Left lung (tissue), 14 donors: ENCODE measurements at regions of chr17 and their contacts with region 1.

Region 1: GRCh38 chr17:10198509-10199253 is at the start of gene GAS7:
- DNase-seq: peak; percentile 66 to 95 (median 82)
- ATAC-seq: peak; percentile 75
- H3K4me3 ChIP-seq: peak within 1 kb of the TSS; percentile 48 to 66
- H3K27ac ChIP-seq: peak within 1 kb of the TSS in 1 of 2 donors; percentile 21
- H3K4me1 ChIP-seq: peaks cover 2 to 27% of the 10 kb centered on the region in 2 donors
- H3K27me3 ChIP-seq: peaks cover 15 to 62% of the 10 kb centered on the region in 2 donors
- CTCF ChIP-seq: no peak
- polyA plus RNA-seq, gene GAS7: 30.4 to 45.1 (median 35.4) TPM

Region 2: DNA sequence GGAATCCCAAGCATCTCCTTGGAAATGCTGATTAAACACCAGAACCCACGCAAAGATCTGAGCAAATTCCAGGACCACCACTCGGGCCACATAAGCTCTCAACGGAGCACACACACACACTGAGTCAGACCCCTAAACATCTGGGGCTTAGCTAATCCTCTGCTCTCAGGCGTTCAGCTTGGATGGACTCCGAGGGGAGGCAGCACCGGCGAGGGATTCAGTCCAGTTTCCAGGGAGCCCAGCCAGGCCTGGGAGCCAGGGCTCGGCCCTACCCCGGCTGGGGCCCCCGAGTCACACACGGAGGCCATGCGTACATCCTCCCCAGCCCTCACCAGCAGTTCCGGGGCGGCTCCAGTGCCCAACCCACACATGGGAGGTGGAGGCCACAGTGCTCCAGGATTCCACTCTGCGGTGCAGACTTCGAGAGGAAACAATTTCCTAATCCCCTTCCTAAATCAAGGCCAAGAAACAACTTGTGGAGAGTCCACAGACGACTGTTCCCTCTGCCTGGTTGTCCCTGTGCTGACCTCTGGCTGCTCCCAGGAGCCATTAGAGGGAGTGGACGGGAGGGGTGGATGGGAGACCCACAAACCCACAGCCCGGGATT is 70.8 kb before region 1 on chr17:
- intact Hi-C with region 1: loop called in 1 of 2 experiments (anchors 10 kb)
- DNase-seq: peak; percentile 80 to 91 (median 86)
- ATAC-seq: peak; percentile 88
- H3K4me3 ChIP-seq: no peak overlapping the region
- H3K27ac ChIP-seq: peak overlapping the region; percentile 55 to 72
- H3K4me1 ChIP-seq: peaks cover 3 to 16% of the 10 kb centered on the region in 2 donors
- H3K27me3 ChIP-seq: peaks cover 0 to 20% of the 10 kb centered on the region in 2 donors
- CTCF ChIP-seq: no peak

Region 3: GRCh38 chr17:10305398-10305797 is 106.7 kb after region 1 on chr17:
- intact Hi-C with region 1: no loop called
- DNase-seq: no peak
- ATAC-seq: no peak
- H3K4me3 ChIP-seq: no peak overlapping the region
- H3K27ac ChIP-seq: no peak overlapping the region
- H3K4me1 ChIP-seq: no peaks in the 10 kb centered on the region
- H3K27me3 ChIP-seq: peaks cover 0 to 7% of the 10 kb centered on the region in 2 donors
- CTCF ChIP-seq: no peak